ENCODE measurements at regions of chr19 and their contacts with region 1.

Region 1: DNA sequence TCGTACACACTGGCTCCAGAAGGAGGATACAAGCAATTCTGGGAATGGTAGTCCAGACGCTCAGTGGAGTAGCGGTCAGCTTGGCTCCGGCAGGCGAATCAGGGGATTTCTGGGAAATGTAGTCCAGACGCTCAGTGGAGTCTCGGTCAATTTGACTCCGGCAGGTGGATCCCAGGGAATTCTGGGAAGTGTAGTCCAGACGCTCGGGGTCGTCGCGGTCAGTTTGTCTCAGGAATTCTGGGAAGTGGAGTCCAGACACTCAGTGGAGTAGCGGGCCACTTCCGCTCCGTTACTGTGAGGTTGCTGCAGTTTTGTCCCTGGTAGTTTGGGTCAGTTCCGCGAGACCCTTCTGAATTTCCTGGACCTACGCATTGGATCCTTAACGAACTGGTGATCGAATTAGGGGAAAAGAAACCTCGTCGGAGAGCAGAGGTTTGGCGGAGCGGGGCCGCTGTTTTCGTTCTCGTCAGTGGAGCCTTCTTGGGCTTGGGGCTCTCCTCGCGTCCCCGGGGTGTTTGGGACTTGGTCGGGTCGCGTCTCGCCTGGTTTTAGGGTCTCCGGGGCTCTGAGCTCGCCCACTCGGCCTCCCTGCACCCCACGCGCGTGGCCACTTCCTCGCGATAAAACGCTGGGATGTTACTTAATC is at the start of gene ZNF225:
- DNase-seq: peak; percentile 96 to 98
- H3K4me3 ChIP-seq: peak within 1 kb of the TSS; percentile 88
- H3K4me3 Mint-ChIP-seq: peak within 1 kb of the TSS; percentile 91
- H3K27ac Mint-ChIP-seq: peak within 1 kb of the TSS; percentile 75
- H3K4me1 ChIP-seq: no peaks in the 10 kb centered on the region
- H3K4me1 Mint-ChIP-seq: peaks cover 7% of the 10 kb centered on the region
- H3K27me3 ChIP-seq: no peaks in the 10 kb centered on the region
- H3K27me3 Mint-ChIP-seq: no peaks in the 10 kb centered on the region
- CTCF ChIP-seq: no peak
- total RNA-seq, gene ZNF225: 4.3 and 4.8 TPM in 2 replicates

Region 2: DNA sequence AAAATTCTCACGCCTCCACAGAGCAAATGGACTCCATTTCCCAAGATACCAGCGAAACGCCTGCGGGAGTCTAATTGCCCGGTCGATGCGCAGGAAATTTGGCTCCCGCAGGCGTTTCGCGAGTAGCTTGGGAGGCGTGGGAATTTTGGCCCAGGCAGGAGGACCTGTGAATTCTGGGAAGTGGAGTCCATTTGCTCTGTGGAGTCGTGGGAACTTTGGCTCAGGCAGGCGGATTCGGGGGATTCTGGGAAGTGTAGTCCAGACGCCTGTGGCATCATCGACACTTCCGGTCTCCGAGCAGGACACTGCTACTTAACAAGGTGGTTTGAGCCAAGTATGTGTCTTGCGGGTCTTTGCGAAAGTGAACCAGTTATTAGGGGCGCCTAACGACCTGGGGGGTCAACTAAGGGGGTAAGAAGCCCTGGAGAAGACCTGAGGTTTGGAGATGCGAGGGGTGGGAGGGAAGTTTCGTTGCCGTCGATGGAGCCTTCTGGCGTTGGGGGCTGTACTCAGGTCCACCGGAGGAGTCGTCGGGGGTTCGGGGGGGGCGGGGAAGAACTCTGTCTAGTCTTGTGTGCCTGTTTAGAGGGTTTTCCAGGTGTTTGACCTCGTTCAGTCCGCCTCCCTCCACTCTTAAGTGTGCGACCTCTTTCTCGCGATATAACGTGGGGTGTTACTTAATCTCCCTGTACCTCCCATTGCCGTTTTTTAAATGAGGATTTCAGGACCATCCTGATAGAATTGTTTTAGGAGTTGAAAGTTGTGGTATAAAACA is 129.2 kb before region 1 on chr19 and contains the start of gene ZNF155:
- CTCF ChIA-PET with region 1: no interaction called
- POLR2A ChIA-PET with region 1: no interaction called
- intact Hi-C with region 1: loop called (anchors 1 kb)
- DNase-seq: peak; percentile 92 to 96
- H3K4me3 ChIP-seq: peak within 1 kb of the TSS; percentile 98
- H3K4me3 Mint-ChIP-seq: peak within 1 kb of the TSS; percentile 99
- H3K27ac Mint-ChIP-seq: peak within 1 kb of the TSS; percentile 95
- H3K4me1 ChIP-seq: no peaks in the 10 kb centered on the region
- H3K4me1 Mint-ChIP-seq: no peaks in the 10 kb centered on the region
- H3K27me3 ChIP-seq: no peaks in the 10 kb centered on the region
- H3K27me3 Mint-ChIP-seq: no peaks in the 10 kb centered on the region
- CTCF ChIP-seq: no peak
- total RNA-seq, gene ZNF155: 9.4 and 10.3 TPM in 2 replicates

Region 3: DNA sequence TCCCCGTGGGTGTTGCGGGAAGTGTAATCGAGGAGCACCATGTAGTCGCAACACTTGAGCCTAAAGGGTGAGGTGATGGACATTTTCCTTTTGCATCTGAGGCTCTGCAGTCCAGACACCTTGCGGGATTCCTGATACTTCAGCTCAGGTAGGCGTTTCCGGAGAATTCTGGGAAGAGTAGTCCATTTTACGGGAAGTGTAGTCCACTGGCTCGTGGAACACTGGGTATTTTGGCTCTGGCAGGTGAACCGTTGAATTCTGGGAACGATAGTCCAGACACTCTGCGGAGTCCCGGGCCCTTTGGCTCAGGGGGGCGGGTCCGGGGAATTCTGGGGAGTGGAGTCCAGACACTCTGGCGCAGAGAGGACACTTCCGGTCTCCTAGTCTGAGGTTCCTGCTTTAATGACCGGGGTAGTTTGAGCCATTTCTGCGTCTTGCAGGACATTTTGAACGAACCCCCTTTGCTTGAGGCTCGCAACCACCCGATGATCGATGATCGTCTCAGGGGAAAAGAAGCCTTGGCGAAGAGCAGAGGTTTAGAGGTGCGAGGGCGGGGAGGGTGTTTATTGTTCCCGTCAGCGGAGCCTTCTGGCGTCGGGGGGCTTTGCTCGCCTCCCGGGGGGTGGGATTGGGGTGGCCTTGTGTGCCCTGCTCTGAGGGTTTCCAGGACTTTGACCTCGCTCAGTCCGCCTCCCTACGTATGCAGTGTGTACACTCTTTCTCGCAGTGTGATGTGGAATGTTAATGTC is 61.4 kb before region 1 on chr19 and contains the start of gene ZNF223:
- CTCF ChIA-PET with region 1: no interaction called
- POLR2A ChIA-PET with region 1: no interaction called
- intact Hi-C with region 1: loop called (anchors 1 kb)
- DNase-seq: peak; percentile 98
- H3K4me3 ChIP-seq: peak within 1 kb of the TSS; percentile 69
- H3K4me3 Mint-ChIP-seq: peak within 1 kb of the TSS; percentile 74
- H3K27ac Mint-ChIP-seq: peak within 1 kb of the TSS; percentile 85
- H3K4me1 ChIP-seq: peaks cover 7% of the 10 kb centered on the region
- H3K4me1 Mint-ChIP-seq: peaks cover 30% of the 10 kb centered on the region
- H3K27me3 ChIP-seq: no peaks in the 10 kb centered on the region
- H3K27me3 Mint-ChIP-seq: no peaks in the 10 kb centered on the region
- CTCF ChIP-seq: no peak
- total RNA-seq, gene ZNF223: 9.9 and 11.3 TPM in 2 replicates

Region 4: GRCh38 chr19:44093931-44094765 is 19.1 kb before region 1 on chr19 and contains the start of gene ZNF224:
- CTCF ChIA-PET with region 1: no interaction called
- POLR2A ChIA-PET with region 1: no interaction called
- intact Hi-C with region 1: loop called (anchors 1 kb)
- DNase-seq: peak; percentile 92 to 94
- H3K4me3 ChIP-seq: peak within 1 kb of the TSS; percentile 74
- H3K4me3 Mint-ChIP-seq: peak within 1 kb of the TSS; percentile 92
- H3K27ac Mint-ChIP-seq: peak within 1 kb of the TSS; percentile 90
- H3K4me1 ChIP-seq: no peaks in the 10 kb centered on the region
- H3K4me1 Mint-ChIP-seq: no peaks in the 10 kb centered on the region
- H3K27me3 ChIP-seq: no peaks in the 10 kb centered on the region
- H3K27me3 Mint-ChIP-seq: no peaks in the 10 kb centered on the region
- CTCF ChIP-seq: no peak
- total RNA-seq, gene ZNF224: 24.7 and 25.9 TPM in 2 replicates

Region 5: GRCh38 chr19:44164673-44165512 is 51.6 kb after region 1 on chr19 and contains the start of gene ZNF226:
- CTCF ChIA-PET with region 1: no interaction called
- POLR2A ChIA-PET with region 1: interaction called, 3 read pairs
- intact Hi-C with region 1: loop called (anchors 1 kb)
- DNase-seq: peak; percentile 95 to 98
- H3K4me3 ChIP-seq: peak within 1 kb of the TSS; percentile 79
- H3K4me3 Mint-ChIP-seq: peak within 1 kb of the TSS; percentile 95
- H3K27ac Mint-ChIP-seq: peak within 1 kb of the TSS; percentile 98
- H3K4me1 ChIP-seq: 0 out of 2 replicates have a peak, but pooled peaks cover 10% of the 10 kb centered on the region
- H3K4me1 Mint-ChIP-seq: no peaks in the 10 kb centered on the region
- H3K27me3 ChIP-seq: no peaks in the 10 kb centered on the region
- H3K27me3 Mint-ChIP-seq: no peaks in the 10 kb centered on the region
- CTCF ChIP-seq: no peak
- total RNA-seq, gene ZNF226: 27.0 and 28.0 TPM in 2 replicates

Region 6: GRCh38 chr19:44212250-44212865 is 99.1 kb after region 1 on chr19 and contains the start of gene ZNF227:
- CTCF ChIA-PET with region 1: no interaction called
- POLR2A ChIA-PET with region 1: no interaction called
- intact Hi-C with region 1: loop called (anchors 1 kb)
- DNase-seq: peak; percentile 93 to 95
- H3K4me3 ChIP-seq: peak within 1 kb of the TSS; percentile 64
- H3K4me3 Mint-ChIP-seq: peak within 1 kb of the TSS; percentile 85
- H3K27ac Mint-ChIP-seq: peak within 1 kb of the TSS; percentile 91
- H3K4me1 ChIP-seq: 0 out of 2 replicates have a peak, but pooled peaks cover 6% of the 10 kb centered on the region
- H3K4me1 Mint-ChIP-seq: peaks cover under 1% of the 10 kb centered on the region
- H3K27me3 ChIP-seq: no peaks in the 10 kb centered on the region
- H3K27me3 Mint-ChIP-seq: no peaks in the 10 kb centered on the region
- CTCF ChIP-seq: no peak
- total RNA-seq, gene ZNF227: 25.9 and 27.3 TPM in 2 replicates

Region 7: DNA sequence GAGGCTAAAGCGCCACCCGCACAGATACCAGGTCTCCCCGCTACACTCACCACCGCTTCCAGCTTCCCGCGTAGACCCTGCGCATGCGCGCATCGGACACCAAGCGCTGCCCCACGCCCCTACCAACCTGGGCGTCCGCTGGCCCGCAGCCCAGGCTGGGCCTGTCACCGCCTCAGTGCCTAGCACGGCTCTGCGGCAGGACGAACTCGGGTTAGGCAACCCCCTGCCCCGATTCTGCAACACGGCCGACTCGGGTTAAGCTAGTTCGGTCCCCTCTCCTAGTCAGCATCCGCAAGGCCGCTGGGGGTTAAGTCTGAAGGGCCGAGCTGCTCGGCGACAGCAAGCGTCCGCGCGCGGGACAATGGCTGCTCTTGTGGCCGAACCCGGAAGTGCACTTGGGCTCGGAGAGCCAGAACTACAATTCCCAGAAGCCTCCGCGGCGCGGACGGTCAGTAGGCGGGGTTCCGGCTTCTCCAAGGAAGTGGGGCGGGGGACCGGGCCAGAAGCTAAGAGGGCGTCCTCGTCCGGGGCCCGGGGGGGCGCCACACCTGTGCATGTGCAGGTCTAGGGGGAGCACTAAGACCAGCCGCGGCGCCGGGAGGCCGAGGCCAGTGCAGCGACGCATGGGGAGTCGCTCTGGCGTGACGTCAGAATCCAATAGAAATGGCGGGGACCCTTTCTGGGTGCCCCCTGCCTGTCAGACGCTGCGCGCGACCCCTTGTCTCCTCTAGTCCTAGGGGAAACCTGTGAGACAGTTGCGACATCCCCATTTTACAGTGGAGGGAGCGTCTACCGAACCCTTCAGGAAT is 387.1 kb after region 1 on chr19 and contains the start of gene ZNF180:
- CTCF ChIA-PET with region 1: no interaction called
- POLR2A ChIA-PET with region 1: no interaction called
- intact Hi-C with region 1: loop called (anchors 1 kb)
- DNase-seq: peak; percentile 98 to 99
- H3K4me3 ChIP-seq: peak within 1 kb of the TSS; percentile 99
- H3K4me3 Mint-ChIP-seq: peak within 1 kb of the TSS; percentile 98
- H3K27ac Mint-ChIP-seq: peak within 1 kb of the TSS; percentile 92
- H3K4me1 ChIP-seq: peaks cover 8% of the 10 kb centered on the region; the same call in 1 of the 2 replicates
- H3K4me1 Mint-ChIP-seq: peaks cover 25% of the 10 kb centered on the region
- H3K27me3 ChIP-seq: no peaks in the 10 kb centered on the region
- H3K27me3 Mint-ChIP-seq: peaks cover 4% of the 10 kb centered on the region
- CTCF ChIP-seq: peak; percentile 38 to 83
- total RNA-seq, gene ZNF180: 9.1 and 13.3 TPM in 2 replicates

Measured in Caco-2 (cell line).